ENCODE measurements at regions of chr12 and their contacts with region 1.

Region 1: GRCh38 chr12:1644534-1645438 is 15.8 kb downstream of the WNT5B start:
- DNase-seq: peak in 1 of 2 experiments; percentile 69
- H3K4me3 ChIP-seq: no peak overlapping the region
- H3K4me1 ChIP-seq: peaks cover 4% of the 10 kb centered on the region; the same call in 1 of the 2 replicates
- H3K27me3 ChIP-seq: no peaks in the 10 kb centered on the region

Region 2: GRCh38 chr12:1791104-1791841 is 146.5 kb after region 1 on chr12:
- in situ Hi-C with region 1: loop called (anchors 5 kb)
- DNase-seq: peak; percentile 49 to 74
- H3K4me3 ChIP-seq: no peak overlapping the region
- H3K4me1 ChIP-seq: peaks cover 4% of the 10 kb centered on the region
- H3K27me3 ChIP-seq: no peaks in the 10 kb centered on the region

Region 3: DNA sequence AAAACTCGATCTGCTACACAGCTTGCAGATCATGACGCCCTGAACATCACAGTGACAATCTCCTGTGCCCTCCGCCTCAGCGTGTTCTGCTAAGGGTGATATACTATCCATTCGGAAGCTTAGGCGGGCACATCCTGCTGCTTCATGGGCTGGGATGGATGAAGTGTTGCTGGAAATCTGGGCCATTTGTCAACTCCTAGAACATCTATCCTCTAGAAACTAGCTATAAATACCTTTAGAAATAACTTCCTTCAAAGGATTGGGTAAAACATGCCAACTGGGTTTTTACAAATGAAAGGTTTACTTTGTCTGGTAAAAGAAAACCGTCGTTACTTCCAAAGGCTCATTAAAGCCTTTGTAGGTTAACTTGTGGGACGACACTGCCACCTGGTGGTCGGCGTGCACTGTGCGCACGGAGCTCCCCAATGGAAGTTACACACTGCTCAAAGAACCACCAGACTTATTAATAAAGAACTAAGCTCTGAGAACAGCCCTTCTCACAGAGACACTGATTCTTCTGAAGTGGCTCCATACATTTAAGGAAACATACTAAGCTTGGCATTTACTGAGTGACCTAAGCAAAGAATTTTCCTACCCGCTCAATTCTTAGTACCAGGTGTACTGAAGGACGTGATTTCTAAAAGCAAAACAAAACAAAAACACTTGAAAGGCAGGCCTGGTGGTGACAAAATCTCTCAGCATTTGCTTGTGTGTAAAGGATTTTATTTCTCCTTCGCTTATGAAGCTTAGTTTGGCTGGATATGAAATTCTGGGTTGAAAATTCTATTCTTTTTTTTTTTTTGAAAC is 295.2 kb after region 1 on chr12:
- in situ Hi-C with region 1: loop called (anchors 5 kb)
- DNase-seq: peak; percentile 77 to 92
- H3K4me3 ChIP-seq: no peak overlapping the region
- H3K4me1 ChIP-seq: peaks cover 4% of the 10 kb centered on the region; the same call in 1 of the 2 replicates
- H3K27me3 ChIP-seq: no peaks in the 10 kb centered on the region

Measured in HAP-1 (cell line).